Lower leg skin (tissue), 4 donors: ENCODE measurements at regions of chr10 and their contacts with region 1.

Region 1: DNA sequence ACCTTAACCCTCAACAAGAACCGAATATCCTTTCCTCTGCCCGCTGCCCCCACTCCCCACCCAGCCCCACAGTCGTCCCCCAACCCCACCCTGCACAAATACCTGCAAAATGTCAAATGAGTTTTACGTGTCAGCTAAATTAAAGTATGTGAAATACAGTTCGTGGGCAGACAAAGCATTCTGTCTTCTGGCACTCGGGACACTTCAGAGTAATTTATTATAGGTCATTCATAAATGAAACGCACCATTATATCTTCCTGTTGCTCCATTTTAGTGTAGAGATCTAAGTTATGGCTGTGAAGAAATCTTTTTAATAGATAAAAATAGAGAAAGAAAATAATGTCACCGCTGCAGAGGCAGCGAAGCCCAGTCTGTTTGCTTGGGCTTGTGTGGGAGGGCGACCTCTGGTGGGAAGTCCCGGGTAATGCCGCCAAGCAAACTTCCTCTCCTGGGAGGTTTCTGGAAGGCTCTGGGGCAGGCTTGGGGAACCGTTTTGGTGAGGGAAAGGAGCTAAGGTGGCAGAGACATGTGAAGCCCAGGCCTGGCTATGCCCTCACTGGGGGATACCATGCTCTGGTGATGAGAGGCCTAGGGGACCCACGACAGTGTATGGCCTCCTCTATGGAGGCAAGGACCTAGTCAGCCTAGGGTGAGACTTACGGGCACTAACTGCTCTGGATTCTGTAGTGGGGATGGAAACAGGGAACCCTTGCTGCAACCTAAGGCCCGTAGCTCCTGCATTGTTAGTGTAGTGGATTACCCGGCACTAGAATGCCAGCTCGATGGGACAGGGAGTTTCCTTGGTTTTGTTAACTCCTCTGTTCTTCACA is 604.9 kb downstream of the LRMDA start:
- DNase-seq: peak; percentile 74 to 96
- H3K4me3 ChIP-seq: no peak overlapping the region
- CTCF ChIP-seq: peak in 1 of 3 donors; percentile 76
- POLR2A ChIP-seq: no peak

Region 2: GRCh38 chr10:75230600-75231038 is 805.7 kb before region 1 on chr10:
- intact Hi-C with region 1: no loop called
- DNase-seq: peak; percentile 90 to 98
- H3K4me3 ChIP-seq: no peak overlapping the region
- CTCF ChIP-seq: peak in 1 of 3 donors; percentile 70
- POLR2A ChIP-seq: no peak

Region 3: DNA sequence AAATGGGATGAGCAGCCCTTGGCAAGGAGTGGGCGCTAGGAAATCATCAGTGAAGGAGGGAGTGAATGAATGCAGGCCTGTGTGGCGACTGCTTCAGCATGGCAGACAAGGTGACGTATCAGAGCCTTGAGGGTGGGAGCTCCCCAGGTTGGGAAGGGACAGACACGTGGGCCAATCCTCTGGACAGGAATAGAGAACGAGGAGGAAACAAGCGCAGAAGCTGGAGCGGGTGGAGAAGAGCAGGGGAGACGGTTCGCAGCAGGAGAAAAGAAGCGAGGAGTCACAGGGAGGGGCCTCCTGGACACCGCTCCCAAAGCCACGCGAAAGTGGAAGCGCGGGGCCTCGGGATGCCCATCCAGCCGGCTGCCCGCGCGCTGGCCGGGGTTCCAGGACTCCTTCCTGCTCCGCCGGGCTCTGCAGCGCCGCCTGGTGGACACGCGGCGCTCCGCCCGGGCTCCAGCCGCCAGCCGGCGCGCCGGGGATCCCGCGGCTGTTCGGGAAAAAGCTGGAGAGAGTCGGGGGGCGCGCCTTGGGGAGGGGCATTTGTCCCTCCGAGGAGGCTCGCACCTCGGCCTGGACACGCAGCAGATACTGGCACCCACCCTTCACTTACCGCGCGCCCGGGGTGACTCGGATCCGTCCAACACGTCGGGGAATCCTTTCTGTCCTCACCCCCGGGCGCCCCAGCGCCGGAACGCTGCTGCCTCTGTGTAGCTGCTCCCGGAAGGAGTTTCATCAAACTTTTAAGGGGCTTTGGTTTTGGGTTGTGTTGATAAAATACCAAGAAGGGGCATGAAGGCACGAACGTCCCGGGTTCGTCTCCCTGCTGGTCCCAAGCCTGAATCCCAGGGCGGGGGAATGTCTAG is 641.0 kb before region 1 on chr10:
- intact Hi-C with region 1: loop called (anchors 2 kb)
- DNase-seq: peak in 1 of 2 donors; percentile 88
- H3K4me3 ChIP-seq: no peak overlapping the region
- CTCF ChIP-seq: peak in 1 of 3 donors; percentile 22
- POLR2A ChIP-seq: no peak

Region 4: GRCh38 chr10:76113959-76114358 is 77.6 kb after region 1 on chr10:
- intact Hi-C with region 1: no loop called
- DNase-seq: no peak
- H3K4me3 ChIP-seq: no peak overlapping the region
- CTCF ChIP-seq: no peak
- POLR2A ChIP-seq: no peak